ENCODE measurements at regions of chr1 and their contacts with region 1.

Region 1: GRCh38 chr1:53061859-53062707 is at the start of gene PODN:
- DNase-seq: peak in 1 of 2 donors; percentile 59
- ATAC-seq: peak; percentile 20 to 60 (median 46)
- H3K4me3 ChIP-seq: peak within 1 kb of the TSS; percentile 31 to 91 (median 66)
- H3K27ac ChIP-seq: peak within 1 kb of the TSS; percentile 36 to 92 (median 78)
- H3K4me1 ChIP-seq: peaks cover 0 to 42% (median 22%) of the 10 kb centered on the region in 9 donors
- H3K27me3 ChIP-seq: peaks cover 0 to 40% (median 8%) of the 10 kb centered on the region in 7 donors
- CTCF ChIP-seq: no peak
- total RNA-seq, gene PODN: 11.2 to 27.4 (median 15.4) TPM

Region 2: GRCh38 chr1:53014791-53015507 is 47.1 kb before region 1 on chr1:
- intact Hi-C with region 1: loop called in 1 of 10 experiments (anchors 5 kb)
- DNase-seq: peak; percentile 42 to 88
- ATAC-seq: peak; percentile 89 to 98 (median 96)
- H3K4me3 ChIP-seq: peak overlapping the region; percentile 38 to 71 (median 59)
- H3K27ac ChIP-seq: peak overlapping the region in 8 of 10 donors; percentile 34 to 83 (median 60)
- H3K4me1 ChIP-seq: peaks cover 0 to 33% (median 25%) of the 10 kb centered on the region in 9 donors
- H3K27me3 ChIP-seq: no peaks in the 10 kb centered on the region
- CTCF ChIP-seq: no peak

Region 3: DNA sequence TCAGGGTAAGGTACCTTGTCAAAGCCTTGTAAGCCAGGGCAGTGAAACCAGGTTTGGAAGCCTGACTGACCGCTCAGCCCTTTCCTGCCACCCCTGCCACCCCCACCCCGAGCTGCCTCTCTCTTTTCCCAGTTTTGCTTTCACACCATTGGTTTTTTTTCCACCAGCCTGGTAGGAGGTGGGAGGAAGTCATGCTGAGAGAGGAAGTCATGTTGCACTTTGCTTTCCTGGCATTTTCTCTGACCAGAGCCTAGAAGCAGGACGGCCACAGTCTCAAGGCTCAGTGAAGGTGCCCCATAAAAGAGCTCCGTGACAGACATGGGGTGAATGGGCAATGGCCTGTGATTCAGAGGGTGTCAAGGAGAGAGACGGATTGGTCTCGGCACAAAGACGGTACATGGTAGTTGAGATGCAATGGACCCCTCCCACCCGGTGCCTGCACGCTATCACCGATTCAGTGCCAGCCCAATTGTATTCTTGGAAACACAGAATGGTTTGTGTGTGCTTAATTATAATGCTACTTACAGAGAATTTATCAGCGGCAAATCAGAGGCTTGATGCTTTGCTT is 355.0 kb after region 1 on chr1:
- intact Hi-C with region 1: no loop called
- DNase-seq: no peak
- ATAC-seq: no peak
- H3K4me3 ChIP-seq: no peak overlapping the region
- H3K27ac ChIP-seq: no peak overlapping the region
- H3K4me1 ChIP-seq: peaks cover 0 to 3% (median 0%) of the 10 kb centered on the region in 9 donors
- H3K27me3 ChIP-seq: peaks cover 0 to 54% (median 30%) of the 10 kb centered on the region in 7 donors
- CTCF ChIP-seq: no peak

Measured in heart right ventricle (tissue), 16 donors.